ENCODE measurements at regions of chr4 and their contacts with region 1.

Region 1: DNA sequence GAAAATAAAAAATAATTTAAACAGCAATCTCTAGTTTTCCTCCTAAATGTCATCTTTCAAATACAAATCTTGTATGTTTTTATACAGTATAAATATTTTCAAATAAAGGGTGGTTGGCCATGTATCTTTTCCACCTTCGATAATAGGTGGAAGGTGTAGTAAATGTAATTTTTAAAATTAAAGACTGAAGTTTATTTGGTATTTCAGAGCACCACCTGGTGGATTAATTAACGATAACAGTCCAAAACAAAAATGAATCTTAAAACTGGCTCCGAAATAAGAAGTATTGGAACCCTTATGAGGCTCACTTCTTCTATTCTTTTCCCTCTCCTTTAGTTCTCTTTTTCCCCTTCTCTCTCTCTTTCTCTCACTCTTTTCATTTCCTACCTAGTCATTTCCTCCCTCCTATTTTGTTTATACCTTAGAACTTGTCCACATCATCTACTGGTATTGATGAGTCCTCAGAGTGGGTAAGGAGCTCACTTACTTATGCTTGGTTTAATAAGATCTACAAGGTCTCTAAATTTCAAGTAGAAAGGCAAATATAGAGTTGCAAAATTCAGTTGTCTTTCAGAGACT is 82.9 kb upstream of the EXOC1L start:
- DNase-seq: no peak
- H3K4me3 Mint-ChIP-seq: no peak overlapping the region
- H3K27ac Mint-ChIP-seq: no peak overlapping the region
- H3K4me1 Mint-ChIP-seq: peaks cover 1% of the 10 kb centered on the region
- H3K27me3 Mint-ChIP-seq: peaks cover 29% of the 10 kb centered on the region

Region 2: DNA sequence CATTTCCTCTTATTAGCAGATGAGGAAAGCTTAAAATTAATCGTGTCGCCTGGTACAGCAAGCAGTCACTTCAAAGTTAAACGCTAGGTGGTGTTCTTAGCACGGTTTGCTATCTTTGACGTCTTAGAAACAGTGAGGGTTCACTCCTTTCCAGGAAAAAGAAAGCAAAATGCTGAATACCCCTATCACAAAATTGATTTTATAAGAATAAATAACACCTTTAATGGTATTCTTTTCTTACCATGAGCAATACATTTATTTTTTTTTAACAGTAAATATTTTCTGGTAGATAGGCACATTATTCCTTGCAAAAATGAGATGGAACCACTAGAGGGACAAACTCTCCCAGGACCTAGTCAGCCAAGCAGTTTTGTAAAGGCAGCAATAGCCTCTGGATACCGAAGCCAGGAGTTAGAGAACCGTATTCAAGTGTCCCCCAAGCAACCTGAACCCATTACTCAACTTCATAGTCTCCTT is 765.2 kb before region 1 on chr4:
- intact Hi-C with region 1: loop called (anchors 10 kb)
- DNase-seq: peak; percentile 61
- H3K4me3 Mint-ChIP-seq: no peak overlapping the region
- H3K27ac Mint-ChIP-seq: no peak overlapping the region
- H3K4me1 Mint-ChIP-seq: no peaks in the 10 kb centered on the region
- H3K27me3 Mint-ChIP-seq: no peaks in the 10 kb centered on the region

Region 3: GRCh38 chr4:56240554-56241174 is 504.0 kb after region 1 on chr4:
- intact Hi-C with region 1: no loop called
- DNase-seq: no peak
- H3K4me3 Mint-ChIP-seq: no peak overlapping the region
- H3K27ac Mint-ChIP-seq: no peak overlapping the region
- H3K4me1 Mint-ChIP-seq: no peaks in the 10 kb centered on the region
- H3K27me3 Mint-ChIP-seq: peaks cover 15% of the 10 kb centered on the region

Measured in activated CD4-positive, alpha-beta T cell treated with anti-CD3 and anti-CD28 coated beads, Interleukin-2, amount 10 ng/mL, durations not matched to agents 24 days and 14 days (primary cell).